GM12878 (cell line): ENCODE measurements at regions of chr9 and their contacts with region 1.

Region 1: GRCh38 chr9:136631038-136632000 is 31.4 kb upstream of the EGFL7 start:
- DNase-seq: peak; percentile 40
- ATAC-seq: peak; percentile 96
- H3K4me3 ChIP-seq: no peak overlapping the region
- H3K27ac ChIP-seq: no peak overlapping the region
- H3K4me1 ChIP-seq: no peaks in the 10 kb centered on the region; the same call in 1 of the 2 replicates
- H3K27me3 ChIP-seq: no peaks in the 10 kb centered on the region; a peak in 2 of 4 replicates
- CTCF ChIP-seq: peak; percentile 72 to 89 (median 88)
- EP300 ChIP-seq: no peak
- POLR2A ChIP-seq: no peak
- RAD21 ChIP-seq: peak; percentile 98

Region 2: GRCh38 chr9:136488247-136489214 is 142.8 kb before region 1 on chr9:
- CTCF ChIA-PET with region 1: interaction called, 223 read pairs
- POLR2A ChIA-PET with region 1: interaction called, 3 read pairs
- RAD21 ChIA-PET with region 1: interaction called, 126 read pairs
- SMC1A ChIA-PET with region 1: interaction called, 16 read pairs
- in situ Hi-C with region 1: loop called (anchors 5 kb)
- intact Hi-C with region 1: loop called (anchors 1 kb)
- DNase-seq: no peak
- ATAC-seq: peak; percentile 72
- H3K4me3 ChIP-seq: no peak overlapping the region
- H3K27ac ChIP-seq: no peak overlapping the region
- H3K4me1 ChIP-seq: peaks cover 6% of the 10 kb centered on the region; the same call in 1 of the 2 replicates
- H3K27me3 ChIP-seq: no peaks in the 10 kb centered on the region
- CTCF ChIP-seq: peak; percentile 89 to 98 (median 91)
- EP300 ChIP-seq: no peak
- POLR2A ChIP-seq: no peak
- RAD21 ChIP-seq: peak; percentile 93

Region 3: DNA sequence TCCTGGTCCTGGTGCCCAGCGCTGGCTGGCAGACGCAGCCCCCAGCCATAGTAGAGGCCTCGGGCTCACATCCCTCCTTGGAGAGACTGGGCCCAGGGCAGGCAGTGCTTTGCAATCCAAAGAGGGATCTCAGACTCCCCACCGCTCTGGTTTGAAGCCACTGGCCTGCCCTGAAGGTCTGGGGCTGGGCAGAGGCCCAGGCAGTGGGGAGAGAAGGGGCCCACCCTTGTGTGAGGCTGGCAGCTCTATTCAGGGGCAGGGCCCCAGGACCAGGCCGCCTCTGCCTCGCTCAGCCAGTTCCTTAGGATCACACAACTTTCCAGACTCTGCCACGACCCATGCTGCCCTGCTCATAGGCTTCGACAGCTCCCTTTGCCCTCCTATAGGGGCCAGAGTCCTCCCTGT is 137.8 kb before region 1 on chr9:
- CTCF ChIA-PET with region 1: interaction called, 223 read pairs
- POLR2A ChIA-PET with region 1: no interaction called
- RAD21 ChIA-PET with region 1: interaction called, 126 read pairs
- SMC1A ChIA-PET with region 1: interaction called, 16 read pairs
- in situ Hi-C with region 1: loop called (anchors 5 kb)
- intact Hi-C with region 1: no loop called
- DNase-seq: no peak
- ATAC-seq: peak; percentile 29
- H3K4me3 ChIP-seq: no peak overlapping the region
- H3K27ac ChIP-seq: no peak overlapping the region
- H3K4me1 ChIP-seq: no peaks in the 10 kb centered on the region
- H3K27me3 ChIP-seq: no peaks in the 10 kb centered on the region
- CTCF ChIP-seq: no peak
- EP300 ChIP-seq: no peak
- POLR2A ChIP-seq: no peak
- RAD21 ChIP-seq: no peak

Region 4: DNA sequence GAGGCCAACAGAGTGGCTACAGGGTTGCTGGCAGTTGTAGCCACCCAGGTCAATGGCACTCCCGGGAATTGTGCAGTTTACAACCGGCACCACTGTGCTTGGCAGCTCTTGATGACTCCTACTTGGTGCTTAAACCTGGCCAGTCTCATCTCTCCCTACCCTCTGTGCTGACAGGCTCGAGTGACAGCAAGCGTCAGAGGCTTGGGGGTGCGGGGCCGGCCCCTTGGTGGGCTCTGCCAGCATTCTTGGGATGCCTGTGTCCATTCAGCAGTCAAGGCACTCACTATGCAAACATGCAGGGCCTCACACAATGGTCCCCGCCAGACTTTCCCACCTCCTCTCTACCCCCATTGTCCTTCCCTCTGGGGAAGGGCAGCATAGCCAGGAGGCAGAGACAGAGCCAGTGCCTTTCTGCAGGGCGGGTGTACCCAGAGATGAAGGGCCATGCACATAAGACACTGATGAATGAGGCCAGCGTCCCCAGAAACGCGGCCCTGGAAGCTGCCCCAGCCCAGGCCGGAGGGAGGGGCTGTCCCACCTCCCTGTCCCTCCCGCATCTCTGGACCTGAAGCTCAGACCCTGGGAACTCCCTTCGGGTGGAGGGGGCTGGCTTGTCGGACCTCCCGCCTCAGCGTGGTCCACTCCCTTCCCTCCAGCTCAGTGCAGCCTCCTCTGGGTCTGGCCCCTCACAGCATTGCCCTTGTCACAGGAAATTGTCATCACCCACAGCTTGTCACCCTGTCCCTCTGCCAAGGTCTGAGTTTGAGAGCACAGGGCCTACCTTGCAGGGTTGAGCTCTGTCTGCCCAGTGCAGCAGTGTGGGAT is 59.1 kb before region 1 on chr9:
- CTCF ChIA-PET with region 1: no interaction called
- POLR2A ChIA-PET with region 1: no interaction called
- RAD21 ChIA-PET with region 1: no interaction called
- SMC1A ChIA-PET with region 1: no interaction called
- in situ Hi-C with region 1: no loop called
- intact Hi-C with region 1: no loop called
- DNase-seq: no peak
- ATAC-seq: no peak
- H3K4me3 ChIP-seq: no peak overlapping the region
- H3K27ac ChIP-seq: no peak overlapping the region
- H3K4me1 ChIP-seq: peaks cover 4% of the 10 kb centered on the region
- H3K27me3 ChIP-seq: no peaks in the 10 kb centered on the region
- CTCF ChIP-seq: no peak
- EP300 ChIP-seq: no peak
- POLR2A ChIP-seq: no peak
- RAD21 ChIP-seq: no peak

Region 5: DNA sequence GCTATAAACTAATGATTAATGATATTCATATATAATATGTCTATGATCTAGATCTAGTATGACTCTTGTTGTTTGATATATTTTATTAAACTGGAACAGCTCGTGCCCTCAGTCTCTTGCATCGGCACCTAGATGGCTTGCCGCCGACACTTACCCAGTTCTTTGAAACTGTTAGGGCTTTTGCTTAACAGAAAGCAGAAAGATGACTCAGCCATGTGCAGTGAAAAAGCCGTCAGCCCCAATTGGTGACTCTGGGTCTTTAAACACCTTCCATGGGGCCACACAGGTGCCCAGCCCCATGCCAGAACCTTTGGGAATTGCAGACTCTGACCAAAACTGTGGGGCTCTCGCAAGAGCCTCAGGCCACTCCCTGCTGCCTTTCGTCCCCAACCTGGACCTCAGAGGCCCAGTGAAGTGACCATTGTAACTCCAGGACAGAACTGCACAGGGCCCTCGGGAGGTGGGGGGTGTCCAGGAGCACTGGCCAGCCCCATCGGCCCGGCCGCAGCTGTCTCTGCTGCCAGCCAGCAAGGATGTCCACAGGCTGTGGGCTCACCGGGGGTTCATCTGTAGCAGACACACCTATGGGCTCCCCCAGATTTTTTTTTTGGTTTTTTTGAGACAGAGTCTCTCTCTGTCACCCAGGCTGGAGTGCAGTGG is 103.6 kb after region 1 on chr9:
- CTCF ChIA-PET with region 1: no interaction called
- POLR2A ChIA-PET with region 1: no interaction called
- RAD21 ChIA-PET with region 1: no interaction called
- SMC1A ChIA-PET with region 1: no interaction called
- in situ Hi-C with region 1: no loop called
- intact Hi-C with region 1: no loop called
- DNase-seq: no peak
- ATAC-seq: no peak
- H3K4me3 ChIP-seq: no peak overlapping the region
- H3K27ac ChIP-seq: no peak overlapping the region
- H3K4me1 ChIP-seq: no peaks in the 10 kb centered on the region
- H3K27me3 ChIP-seq: no peaks in the 10 kb centered on the region
- CTCF ChIP-seq: no peak
- EP300 ChIP-seq: no peak
- POLR2A ChIP-seq: no peak
- RAD21 ChIP-seq: no peak